Left lung (tissue), 14 donors: ENCODE measurements at regions of chr3 and their contacts with region 1.

Region 1: GRCh38 chr3:134212906-134213665 is 37.6 kb downstream of the RYK start:
- DNase-seq: peak; percentile 59 to 83 (median 77)
- ATAC-seq: peak; percentile 97
- H3K4me3 ChIP-seq: no peak overlapping the region
- H3K27ac ChIP-seq: no peak overlapping the region
- H3K4me1 ChIP-seq: no peaks in the 10 kb centered on the region
- H3K27me3 ChIP-seq: no peaks in the 10 kb centered on the region
- CTCF ChIP-seq: peak; percentile 92 to 98

Region 2: DNA sequence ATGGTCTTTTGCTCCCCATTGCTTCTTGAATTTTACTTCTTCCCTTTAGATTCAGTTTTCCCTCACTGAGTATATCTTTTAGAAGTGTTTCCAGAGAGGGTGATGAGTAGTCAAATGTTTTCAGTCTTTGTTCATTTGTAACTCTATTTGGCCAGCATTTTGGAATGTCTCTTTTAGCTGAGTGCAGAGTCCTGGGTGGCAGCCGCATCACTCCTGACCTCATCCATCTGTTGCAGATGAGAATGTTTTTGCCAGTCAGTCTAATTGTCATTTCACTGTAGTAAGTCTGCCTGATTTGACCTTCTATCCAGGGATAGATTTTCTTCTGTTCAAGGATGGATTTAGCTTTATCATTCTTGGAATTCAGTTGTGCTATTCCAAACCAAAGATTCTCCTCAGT is 400.2 kb before region 1 on chr3:
- intact Hi-C with region 1: loop called in 1 of 2 experiments (anchors 10 kb)
- DNase-seq: no peak
- ATAC-seq: no peak
- H3K4me3 ChIP-seq: no peak overlapping the region
- H3K27ac ChIP-seq: no peak overlapping the region
- H3K4me1 ChIP-seq: peaks cover 0 to 3% of the 10 kb centered on the region in 2 donors
- H3K27me3 ChIP-seq: no peaks in the 10 kb centered on the region
- CTCF ChIP-seq: no peak

Region 3: DNA sequence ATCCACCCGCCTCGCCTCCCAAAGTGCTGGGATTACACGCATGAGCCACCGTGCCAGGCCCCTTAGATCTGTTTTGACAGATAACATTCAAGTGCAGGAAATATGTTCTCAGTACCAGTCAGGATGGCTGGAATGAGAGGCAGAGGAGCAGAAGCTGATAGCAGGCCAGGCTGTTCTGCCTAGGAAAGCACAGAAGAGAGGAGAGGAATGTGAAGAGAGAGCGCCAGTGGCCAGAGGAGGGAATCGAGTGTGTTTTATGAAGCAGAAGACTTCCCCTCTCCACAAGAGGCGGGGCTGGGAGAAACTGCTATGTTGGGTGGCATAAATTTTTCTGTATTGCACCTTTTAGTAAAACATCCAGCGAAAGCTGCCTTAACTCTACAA is 69.6 kb after region 1 on chr3:
- intact Hi-C with region 1: no loop called
- DNase-seq: no peak
- ATAC-seq: peak; percentile 71
- H3K4me3 ChIP-seq: no peak overlapping the region
- H3K27ac ChIP-seq: no peak overlapping the region
- H3K4me1 ChIP-seq: peaks cover 0 to 5% of the 10 kb centered on the region in 2 donors
- H3K27me3 ChIP-seq: no peaks in the 10 kb centered on the region
- CTCF ChIP-seq: no peak

Region 4: DNA sequence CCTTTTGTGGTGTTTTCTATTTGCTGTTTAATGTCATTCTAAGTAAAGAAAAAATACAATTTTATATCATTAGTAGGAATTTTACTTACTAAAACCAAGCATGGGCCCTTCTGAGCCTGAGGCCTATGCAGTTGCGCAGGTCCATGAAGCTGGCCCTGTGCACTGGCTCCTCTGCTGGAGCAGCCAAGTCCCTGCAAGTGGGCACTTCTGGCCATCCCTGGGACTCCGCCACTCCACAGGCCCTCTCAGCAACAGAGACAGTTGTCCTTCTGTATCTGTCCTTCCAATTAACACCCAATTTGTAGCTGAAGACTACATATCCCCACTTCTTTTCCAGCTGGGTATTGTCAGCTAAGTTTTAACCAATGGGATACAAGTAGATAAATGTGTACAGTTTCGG is 87.4 kb after region 1 on chr3:
- intact Hi-C with region 1: loop called in 1 of 2 experiments (anchors 5 kb)
- DNase-seq: no peak
- ATAC-seq: no peak
- H3K4me3 ChIP-seq: no peak overlapping the region
- H3K27ac ChIP-seq: no peak overlapping the region
- H3K4me1 ChIP-seq: no peaks in the 10 kb centered on the region
- H3K27me3 ChIP-seq: no peaks in the 10 kb centered on the region
- CTCF ChIP-seq: no peak

Region 5: GRCh38 chr3:134471521-134472193 is 258.6 kb after region 1 on chr3:
- intact Hi-C with region 1: no loop called
- DNase-seq: no peak
- ATAC-seq: no peak
- H3K4me3 ChIP-seq: no peak overlapping the region
- H3K27ac ChIP-seq: peak overlapping the region in 1 of 2 donors; percentile 28
- H3K4me1 ChIP-seq: peaks cover 0 to 7% of the 10 kb centered on the region in 2 donors
- H3K27me3 ChIP-seq: no peaks in the 10 kb centered on the region
- CTCF ChIP-seq: no peak

Region 6: DNA sequence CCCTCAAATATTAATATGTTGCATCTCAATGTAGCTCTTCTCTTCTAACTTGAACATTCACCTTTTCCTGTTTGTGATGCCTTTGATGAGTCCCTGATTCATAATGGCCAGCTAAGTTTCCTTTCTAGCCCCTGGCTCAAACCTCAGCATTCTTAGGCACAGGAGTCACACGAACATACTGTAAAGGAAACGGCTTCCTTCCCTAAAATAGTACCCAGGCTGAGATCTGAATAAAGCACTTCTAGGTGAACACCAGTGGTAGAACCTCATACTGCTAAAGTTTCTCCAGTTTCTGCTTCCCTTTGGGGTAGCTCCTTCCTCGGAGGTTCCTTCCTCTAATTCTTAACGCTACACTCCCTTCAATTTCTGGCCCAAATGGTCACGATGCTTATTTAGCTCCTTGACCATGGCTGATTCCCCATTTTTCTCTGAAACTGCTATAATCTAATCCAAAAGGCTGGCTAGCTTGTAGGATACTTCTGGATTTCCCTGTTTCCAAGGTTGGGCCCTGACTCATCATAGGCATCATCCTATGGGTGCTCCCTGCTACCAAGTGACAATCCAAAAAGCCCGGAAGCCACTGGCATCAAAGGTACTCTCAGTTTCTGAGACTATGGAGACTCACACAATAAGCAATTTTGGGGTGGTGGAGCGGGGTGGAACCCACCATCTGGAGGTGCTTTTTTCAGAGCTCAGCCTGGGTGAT is 270.3 kb after region 1 on chr3:
- intact Hi-C with region 1: loop called in 1 of 2 experiments (anchors 5 kb)
- DNase-seq: no peak
- ATAC-seq: no peak
- H3K4me3 ChIP-seq: no peak overlapping the region
- H3K27ac ChIP-seq: peak overlapping the region in 1 of 2 donors; percentile 78
- H3K4me1 ChIP-seq: peaks cover 19 to 52% of the 10 kb centered on the region in 2 donors
- H3K27me3 ChIP-seq: no peaks in the 10 kb centered on the region
- CTCF ChIP-seq: no peak

Region 7: GRCh38 chr3:135513106-135514059 is 1300.3 kb after region 1 on chr3:
- intact Hi-C with region 1: no loop called
- DNase-seq: no peak
- ATAC-seq: no peak
- H3K4me3 ChIP-seq: no peak overlapping the region
- H3K27ac ChIP-seq: no peak overlapping the region
- H3K4me1 ChIP-seq: no peaks in the 10 kb centered on the region
- H3K27me3 ChIP-seq: peaks cover 0 to 15% of the 10 kb centered on the region in 2 donors
- CTCF ChIP-seq: no peak